Mammary epithelial cell (primary cell): ENCODE measurements at regions of chr18 and their contacts with region 1.

Region 1: DNA sequence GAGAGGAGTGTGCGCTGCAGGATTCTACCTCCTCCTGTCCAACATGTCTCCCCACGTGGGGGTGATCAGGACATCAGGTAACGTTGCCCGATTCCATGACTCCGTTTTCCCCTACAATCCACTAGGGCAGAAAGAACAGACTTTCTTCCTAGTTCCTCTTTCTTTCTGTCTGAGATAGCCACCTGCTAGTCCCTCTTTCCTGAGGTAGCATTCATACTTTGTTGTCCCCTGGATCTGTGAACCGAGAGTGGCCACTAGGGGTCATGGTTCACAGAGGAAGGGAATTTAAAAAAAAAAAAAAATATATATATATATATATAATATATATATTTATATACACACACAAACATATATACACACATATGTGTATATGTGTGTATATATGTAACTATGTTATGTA is 210.0 kb upstream of the ZNF521 start:
- DNase-seq: peak; percentile 3
- H3K4me3 ChIP-seq: no peak overlapping the region
- H3K27ac ChIP-seq: no peak overlapping the region
- H3K4me1 ChIP-seq: no peaks in the 10 kb centered on the region
- H3K27me3 ChIP-seq: no peaks in the 10 kb centered on the region
- CTCF ChIP-seq: peak; percentile 19 to 53

Region 2: GRCh38 chr18:25533218-25533617 is 28.7 kb before region 1 on chr18:
- CTCF ChIA-PET with region 1: no interaction called
- dilution Hi-C with region 1: no loop called
- in situ Hi-C with region 1: no loop called
- intact Hi-C with region 1: no loop called
- DNase-seq: peak; percentile 1
- H3K4me3 ChIP-seq: no peak overlapping the region
- H3K27ac ChIP-seq: no peak overlapping the region
- H3K4me1 ChIP-seq: peaks cover 3% of the 10 kb centered on the region
- H3K27me3 ChIP-seq: no peaks in the 10 kb centered on the region
- CTCF ChIP-seq: no peak

Region 3: DNA sequence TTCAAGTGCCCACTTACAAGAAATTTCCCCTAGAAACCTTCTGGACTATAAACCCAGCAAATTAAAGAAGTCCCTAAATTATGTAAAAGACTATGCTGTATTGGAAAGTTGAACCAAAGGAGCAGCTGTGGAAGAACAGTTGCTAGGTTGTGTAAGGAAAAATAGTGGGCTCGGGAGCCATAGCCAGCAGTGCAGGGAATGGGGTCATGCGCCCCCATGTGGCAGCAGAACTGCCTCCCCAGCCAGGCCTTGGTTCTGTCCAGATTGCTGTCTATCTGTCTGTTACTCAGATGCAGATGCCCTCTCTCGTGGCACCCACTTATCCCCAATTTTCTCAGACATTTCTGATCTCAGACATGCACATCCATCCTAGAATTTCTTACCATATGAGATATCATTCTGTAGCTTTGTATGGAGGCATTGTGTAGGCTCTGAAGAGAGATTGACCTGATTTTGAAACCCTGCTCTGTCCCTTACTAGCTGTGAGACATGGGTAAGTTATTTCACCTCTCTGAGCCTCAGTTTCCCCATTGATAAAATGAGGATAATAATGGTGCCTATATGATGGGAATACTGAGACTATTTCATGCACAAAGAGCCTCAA is 270.2 kb after region 1 on chr18:
- CTCF ChIA-PET with region 1: no interaction called
- dilution Hi-C with region 1: no loop called
- in situ Hi-C with region 1: loop called in 1 of 2 experiments (anchors 10 kb)
- intact Hi-C with region 1: loop called (anchors 1 kb)
- DNase-seq: peak; percentile 33
- H3K4me3 ChIP-seq: no peak overlapping the region
- H3K27ac ChIP-seq: no peak overlapping the region
- H3K4me1 ChIP-seq: peaks cover 17% of the 10 kb centered on the region
- H3K27me3 ChIP-seq: no peaks in the 10 kb centered on the region
- CTCF ChIP-seq: peak; percentile 83 to 87

Region 4: GRCh38 chr18:25896178-25896780 is 334.4 kb after region 1 on chr18:
- CTCF ChIA-PET with region 1: no interaction called
- dilution Hi-C with region 1: no loop called
- in situ Hi-C with region 1: no loop called
- intact Hi-C with region 1: loop called (anchors 2 kb)
- DNase-seq: peak; percentile 33
- H3K4me3 ChIP-seq: no peak overlapping the region
- H3K27ac ChIP-seq: no peak overlapping the region
- H3K4me1 ChIP-seq: no peaks in the 10 kb centered on the region
- H3K27me3 ChIP-seq: no peaks in the 10 kb centered on the region
- CTCF ChIP-seq: peak; percentile 67 to 88